Aorta (tissue), 5 donors: ENCODE measurements at regions of chr22 and their contacts with region 1.

Region 1: GRCh38 chr22:19909350-19910179 is 32.0 kb upstream of the COMT start:
- DNase-seq: peak; percentile 88 to 94
- ATAC-seq: peak; percentile 89
- H3K4me3 ChIP-seq: no peak overlapping the region
- H3K27ac ChIP-seq: no peak overlapping the region
- H3K4me1 ChIP-seq: no peaks in the 10 kb centered on the region
- H3K27me3 ChIP-seq: no peaks in the 10 kb centered on the region

Region 2: GRCh38 chr22:19730655-19731360 is 178.8 kb before region 1 on chr22:
- intact Hi-C with region 1: loop called (anchors 1 to 2 kb)
- DNase-seq: peak; percentile 90 to 97
- ATAC-seq: peak; percentile 89
- H3K4me3 ChIP-seq: no peak overlapping the region
- H3K27ac ChIP-seq: no peak overlapping the region
- H3K4me1 ChIP-seq: no peaks in the 10 kb centered on the region
- H3K27me3 ChIP-seq: no peaks in the 10 kb centered on the region

Region 3: GRCh38 chr22:19854778-19855503 is 54.6 kb before region 1 on chr22 and contains the starts of genes GNB1L and RTL10:
- intact Hi-C with region 1: loop called in 1 of 2 experiments (anchors 10 kb)
- DNase-seq: peak; percentile 98 to 100
- ATAC-seq: peak; percentile 98
- H3K4me3 ChIP-seq: peak within 1 kb of the TSS; percentile 59 to 79
- H3K27ac ChIP-seq: peak within 1 kb of the TSS in 1 of 2 donors; percentile 72
- H3K4me1 ChIP-seq: no peaks in the 10 kb centered on the region
- H3K27me3 ChIP-seq: no peaks in the 10 kb centered on the region
- total RNA-seq, gene GNB1L: 4.7 to 5.0 TPM
- total RNA-seq, gene RTL10: 7.7 to 16.6 TPM